Dorsolateral prefrontal cortex (tissue), 120 donors: ENCODE measurements at regions of chr1 and their contacts with region 1.

Region 1: DNA sequence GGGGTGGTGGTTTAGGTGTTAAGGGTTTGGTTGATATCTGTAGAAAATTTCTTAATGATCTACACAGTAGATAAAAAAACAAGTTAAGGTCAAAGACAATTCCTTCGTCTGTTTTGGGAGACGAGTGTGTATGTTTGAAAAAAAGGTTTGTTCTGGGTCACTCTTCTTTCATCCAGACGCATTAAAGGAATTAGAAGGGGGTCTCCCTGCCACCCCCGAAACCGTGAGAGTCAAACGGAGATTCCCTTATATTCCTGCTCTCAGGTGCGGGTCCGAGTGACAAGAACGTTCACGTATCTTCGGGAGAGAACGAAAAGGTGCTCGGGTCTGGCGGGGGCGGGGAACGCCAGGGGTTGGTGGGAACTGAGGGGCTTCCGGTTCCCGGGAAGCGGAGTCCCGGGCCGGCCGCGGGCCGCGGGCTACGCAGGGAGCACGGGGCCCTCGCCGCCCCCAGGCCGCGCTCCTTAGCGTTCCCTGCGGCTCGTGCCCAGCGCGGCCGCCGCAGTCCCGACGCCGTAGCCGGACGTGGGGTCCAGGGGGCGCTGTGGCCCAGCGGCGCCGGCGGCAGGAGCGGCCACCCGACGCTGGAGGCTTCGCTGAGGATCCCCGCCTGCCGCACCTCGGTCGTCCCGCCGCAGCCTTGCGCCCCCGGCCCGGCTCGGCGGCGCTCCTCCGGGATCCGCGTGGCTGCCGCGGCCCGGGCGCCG is at the start of gene ZFYVE9:
- DNase-seq: peak; percentile 32 to 84 (median 61)
- H3K4me3 ChIP-seq: peak within 1 kb of the TSS; percentile 57 to 97 (median 85)
- H3K27ac ChIP-seq: peak within 1 kb of the TSS; percentile 55 to 98 (median 93)
- H3K27me3 ChIP-seq: no peaks in the 10 kb centered on the region
- CTCF ChIP-seq: peak in 55 of 56 donors; percentile 13 to 91 (median 62)
- total RNA-seq, gene ZFYVE9: 28.8 to 91.5 (median 70.2) TPM

Region 2: GRCh38 chr1:51878616-51879336 is 262.9 kb before region 1 on chr1 and contains the start of gene NRDC:
- intact Hi-C with region 1: loop called in 1 of 2 experiments (anchors 5 kb)
- DNase-seq: peak; percentile 97 to 100 (median 100)
- H3K4me3 ChIP-seq: peak within 1 kb of the TSS; percentile 70 to 100 (median 95)
- H3K27ac ChIP-seq: peak within 1 kb of the TSS; percentile 88 to 100 (median 96)
- H3K27me3 ChIP-seq: peaks cover 0 to 29% (median 0%) of the 10 kb centered on the region in 45 donors
- CTCF ChIP-seq: peak in 16 of 56 donors; percentile 4 to 34 (median 12)
- total RNA-seq, gene NRDC: 108 to 175 (median 151) TPM

Region 3: DNA sequence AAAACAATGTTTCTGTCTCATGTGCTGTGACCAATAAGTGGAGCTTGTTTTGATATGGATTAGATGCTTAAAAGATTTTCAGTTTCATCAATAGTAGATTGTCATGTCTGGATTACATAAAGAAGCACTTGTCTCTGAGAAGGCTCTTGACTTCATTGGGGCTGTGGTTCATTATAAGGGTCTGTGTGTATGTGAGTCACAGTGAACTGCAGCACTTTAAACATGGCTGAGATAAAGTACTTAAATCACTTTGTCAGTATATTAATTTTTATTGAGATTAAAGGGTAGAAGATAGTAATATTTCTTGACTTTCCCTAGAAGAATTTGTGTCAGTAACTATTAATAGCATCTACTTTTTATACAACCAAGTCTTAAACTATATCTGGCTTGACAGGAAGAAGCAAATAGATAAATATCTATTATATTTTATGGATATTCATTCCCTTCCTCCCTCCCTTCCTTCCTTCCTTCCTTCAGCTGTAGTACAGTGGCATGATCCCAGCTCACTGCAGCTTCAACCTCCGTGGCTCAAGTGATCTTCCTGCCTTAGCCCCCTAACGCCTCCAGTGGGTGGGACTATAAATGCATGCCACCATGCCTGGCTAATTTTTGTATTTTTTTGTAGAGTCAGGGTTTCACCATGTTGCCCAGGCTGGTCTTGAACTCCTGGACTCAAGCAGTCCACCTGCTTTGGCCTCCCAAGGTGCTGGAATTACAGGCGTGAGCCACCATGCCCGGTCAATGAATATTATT is 49.0 kb after region 1 on chr1:
- intact Hi-C with region 1: no loop called
- DNase-seq: no peak
- H3K4me3 ChIP-seq: no peak overlapping the region
- H3K27ac ChIP-seq: no peak overlapping the region
- H3K27me3 ChIP-seq: no peaks in the 10 kb centered on the region
- CTCF ChIP-seq: no peak

Region 4: GRCh38 chr1:52348704-52349300 is 207.1 kb after region 1 on chr1:
- intact Hi-C with region 1: loop called in 1 of 2 experiments (anchors 5 kb)
- DNase-seq: peak in 7 of 10 donors; percentile 38 to 76 (median 66)
- H3K4me3 ChIP-seq: no peak overlapping the region
- H3K27ac ChIP-seq: peak overlapping the region in 47 of 59 donors; percentile 0 to 74 (median 40)
- H3K27me3 ChIP-seq: no peaks in the 10 kb centered on the region
- CTCF ChIP-seq: peak in 48 of 56 donors; percentile 11 to 65 (median 42)

Region 5: DNA sequence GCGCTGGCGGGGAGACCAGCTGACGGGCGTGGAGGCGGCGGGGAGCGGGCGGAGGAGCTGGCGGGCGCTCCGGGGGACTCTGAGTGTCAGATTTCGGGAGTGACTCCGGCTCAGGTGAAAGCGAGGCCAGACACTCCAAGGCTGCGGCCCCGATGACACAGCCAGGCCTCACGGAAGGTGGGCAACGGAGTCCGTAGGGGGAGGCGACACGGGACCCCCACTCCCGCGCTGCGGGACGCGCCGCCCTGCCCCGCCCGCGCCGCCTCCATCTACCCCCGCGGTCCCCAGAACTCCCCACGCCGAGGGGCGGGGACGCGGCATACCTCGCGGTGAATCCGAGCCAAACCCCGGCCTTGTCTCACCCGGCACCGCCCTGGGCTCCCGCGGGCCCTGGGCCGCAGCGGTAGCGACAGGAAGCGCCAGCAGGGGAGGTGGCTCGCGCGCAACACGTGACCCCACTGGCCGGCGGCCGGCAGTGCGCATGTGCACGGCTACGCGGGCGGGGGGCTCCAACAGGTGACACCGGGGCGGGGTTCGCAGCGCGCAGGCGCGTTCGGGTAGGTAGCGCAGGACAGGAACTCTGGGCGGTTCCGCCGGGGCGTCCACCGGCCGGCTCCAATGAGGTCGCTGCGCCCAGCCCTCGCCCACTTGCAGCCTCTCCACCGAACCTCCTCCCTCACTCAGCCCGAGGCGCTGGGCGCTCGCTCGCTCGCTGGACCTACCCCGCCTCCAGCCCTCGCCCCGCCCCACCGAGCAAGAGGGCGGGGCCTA is 224.3 kb after region 1 on chr1 and contains the start of gene CC2D1B:
- intact Hi-C with region 1: loop called in 1 of 2 experiments (anchors 10 kb)
- DNase-seq: peak; percentile 87 to 98 (median 92)
- H3K4me3 ChIP-seq: peak within 1 kb of the TSS; percentile 66 to 99 (median 94)
- H3K27ac ChIP-seq: peak within 1 kb of the TSS; percentile 55 to 98 (median 92)
- H3K27me3 ChIP-seq: no peaks in the 10 kb centered on the region
- CTCF ChIP-seq: peak in 45 of 56 donors; percentile 10 to 61 (median 40)
- total RNA-seq, gene CC2D1B: 15.7 to 56.7 (median 29.3) TPM

Region 6: DNA sequence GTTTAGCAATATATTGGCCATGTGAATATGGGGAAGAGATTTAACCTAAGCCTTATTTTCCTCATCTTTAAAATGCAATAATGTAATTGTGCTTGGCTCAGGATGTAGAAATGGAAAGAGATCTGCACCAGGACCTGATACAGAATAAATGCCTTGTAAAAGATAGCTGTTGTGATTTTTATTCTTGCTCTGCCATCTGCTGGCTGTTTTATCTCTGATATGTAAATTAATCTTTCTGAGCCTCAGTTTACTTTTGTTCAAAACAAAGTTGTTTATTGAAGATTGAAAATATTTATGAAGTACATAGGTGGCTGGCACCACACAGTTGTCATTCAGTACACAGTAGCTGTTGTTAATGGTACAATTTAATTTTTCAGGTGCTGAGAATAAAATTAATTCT is 606.5 kb after region 1 on chr1:
- intact Hi-C with region 1: loop called in 1 of 2 experiments (anchors 5 kb)
- DNase-seq: no peak
- H3K4me3 ChIP-seq: no peak overlapping the region
- H3K27ac ChIP-seq: no peak overlapping the region
- H3K27me3 ChIP-seq: no peaks in the 10 kb centered on the region
- CTCF ChIP-seq: peak in 54 of 56 donors; percentile 10 to 72 (median 48)